Activated naive CD4-positive, alpha-beta T cell treated with anti-CD3 and anti-CD28 coated beads for 36 hours (primary cell): ENCODE measurements at regions of chr1 and their contacts with region 1.

Region 1: GRCh38 chr1:198520524-198521254 is 19.8 kb downstream of the ATP6V1G3 start:
- DNase-seq: peak; percentile 21
- H3K4me3 Mint-ChIP-seq: peak overlapping the region; percentile 75
- H3K27ac Mint-ChIP-seq: peak overlapping the region; percentile 92
- H3K4me1 Mint-ChIP-seq: peaks cover 57% of the 10 kb centered on the region
- H3K27me3 Mint-ChIP-seq: no peaks in the 10 kb centered on the region

Region 2: GRCh38 chr1:198157241-198157846 is 363.3 kb before region 1 on chr1:
- CTCF ChIA-PET with region 1: no interaction called
- intact Hi-C with region 1: loop called (anchors 1 kb)
- DNase-seq: peak; percentile 84
- H3K4me3 Mint-ChIP-seq: peak overlapping the region; percentile 100
- H3K27ac Mint-ChIP-seq: peak overlapping the region; percentile 98
- H3K4me1 Mint-ChIP-seq: peaks cover 30% of the 10 kb centered on the region
- H3K27me3 Mint-ChIP-seq: no peaks in the 10 kb centered on the region

Region 3: GRCh38 chr1:198491028-198491427 is 29.7 kb before region 1 on chr1:
- CTCF ChIA-PET with region 1: no interaction called
- intact Hi-C with region 1: no loop called
- DNase-seq: no peak
- H3K4me3 Mint-ChIP-seq: no peak overlapping the region
- H3K27ac Mint-ChIP-seq: no peak overlapping the region
- H3K4me1 Mint-ChIP-seq: no peaks in the 10 kb centered on the region
- H3K27me3 Mint-ChIP-seq: no peaks in the 10 kb centered on the region

Region 4: GRCh38 chr1:198556971-198557370 is 36.3 kb after region 1 on chr1:
- CTCF ChIA-PET with region 1: interaction called, 5 read pairs
- intact Hi-C with region 1: loop called (anchors 1 kb)
- DNase-seq: peak; percentile 85
- H3K4me3 Mint-ChIP-seq: peak overlapping the region; percentile 73
- H3K27ac Mint-ChIP-seq: peak overlapping the region; percentile 85
- H3K4me1 Mint-ChIP-seq: peaks cover 81% of the 10 kb centered on the region
- H3K27me3 Mint-ChIP-seq: no peaks in the 10 kb centered on the region

Region 5: GRCh38 chr1:198641501-198641900 is 120.8 kb after region 1 on chr1:
- CTCF ChIA-PET with region 1: interaction called, 3 read pairs
- intact Hi-C with region 1: loop called (anchors 1 kb)
- DNase-seq: peak; percentile 49
- H3K4me3 Mint-ChIP-seq: peak overlapping the region; percentile 92
- H3K27ac Mint-ChIP-seq: peak overlapping the region; percentile 100
- H3K4me1 Mint-ChIP-seq: peaks cover 41% of the 10 kb centered on the region
- H3K27me3 Mint-ChIP-seq: no peaks in the 10 kb centered on the region

Region 6: DNA sequence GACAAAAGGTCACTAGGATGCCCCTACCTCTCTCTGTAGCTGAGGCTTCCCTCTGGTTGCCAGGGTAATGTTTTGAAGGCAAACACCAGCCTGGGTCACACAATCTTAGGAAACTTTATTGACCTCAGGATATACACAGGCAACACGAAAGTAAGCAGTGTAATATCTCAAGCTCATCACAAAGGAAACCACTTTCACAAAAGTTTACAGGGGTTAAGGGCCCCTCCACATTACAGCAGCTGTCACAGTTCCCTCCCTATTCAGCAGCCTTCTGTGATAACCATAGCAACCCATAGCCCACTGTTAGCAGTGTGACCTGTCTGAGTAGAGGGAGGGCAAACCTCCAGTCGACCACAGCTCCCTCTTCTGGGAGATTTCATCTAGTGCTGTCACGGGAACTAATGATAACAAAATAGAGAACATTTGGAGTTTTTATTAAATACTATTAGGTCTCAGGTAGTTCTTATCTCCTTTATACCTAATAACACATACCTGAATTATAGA is 267.9 kb after region 1 on chr1:
- CTCF ChIA-PET with region 1: no interaction called
- intact Hi-C with region 1: loop called (anchors 1 kb)
- DNase-seq: peak; percentile 51
- H3K4me3 Mint-ChIP-seq: no peak overlapping the region
- H3K27ac Mint-ChIP-seq: no peak overlapping the region
- H3K4me1 Mint-ChIP-seq: peaks cover 9% of the 10 kb centered on the region
- H3K27me3 Mint-ChIP-seq: no peaks in the 10 kb centered on the region

Region 7: GRCh38 chr1:199173356-199173755 is 652.7 kb after region 1 on chr1:
- CTCF ChIA-PET with region 1: no interaction called
- intact Hi-C with region 1: loop called (anchors 1 kb)
- DNase-seq: peak; percentile 44
- H3K4me3 Mint-ChIP-seq: no peak overlapping the region
- H3K27ac Mint-ChIP-seq: no peak overlapping the region
- H3K4me1 Mint-ChIP-seq: peaks cover 45% of the 10 kb centered on the region
- H3K27me3 Mint-ChIP-seq: peaks cover 3% of the 10 kb centered on the region